H1 (cell line): ENCODE measurements at regions of chr9 and their contacts with region 1.

Region 1: GRCh38 chr9:136170006-136170901 is 34.7 kb downstream of the LHX3 start:
- DNase-seq: peak in 1 of 2 experiments; percentile 92
- H3K4me3 ChIP-seq: no peak overlapping the region
- H3K27ac ChIP-seq: no peak overlapping the region
- H3K4me1 ChIP-seq: peaks cover 0 to 21% (median 17%) of the 10 kb centered on the region in 4 experiments; a peak in 6 of 7 replicates
- H3K27me3 ChIP-seq: no peaks in the 10 kb centered on the region
- CTCF ChIP-seq: peak in 2 of 3 experiments; percentile 82 to 88; a peak in 3 of 4 replicates
- EP300 ChIP-seq: no peak
- POLR2A ChIP-seq: no peak
- RAD21 ChIP-seq: peak; percentile 79 to 84

Region 2: DNA sequence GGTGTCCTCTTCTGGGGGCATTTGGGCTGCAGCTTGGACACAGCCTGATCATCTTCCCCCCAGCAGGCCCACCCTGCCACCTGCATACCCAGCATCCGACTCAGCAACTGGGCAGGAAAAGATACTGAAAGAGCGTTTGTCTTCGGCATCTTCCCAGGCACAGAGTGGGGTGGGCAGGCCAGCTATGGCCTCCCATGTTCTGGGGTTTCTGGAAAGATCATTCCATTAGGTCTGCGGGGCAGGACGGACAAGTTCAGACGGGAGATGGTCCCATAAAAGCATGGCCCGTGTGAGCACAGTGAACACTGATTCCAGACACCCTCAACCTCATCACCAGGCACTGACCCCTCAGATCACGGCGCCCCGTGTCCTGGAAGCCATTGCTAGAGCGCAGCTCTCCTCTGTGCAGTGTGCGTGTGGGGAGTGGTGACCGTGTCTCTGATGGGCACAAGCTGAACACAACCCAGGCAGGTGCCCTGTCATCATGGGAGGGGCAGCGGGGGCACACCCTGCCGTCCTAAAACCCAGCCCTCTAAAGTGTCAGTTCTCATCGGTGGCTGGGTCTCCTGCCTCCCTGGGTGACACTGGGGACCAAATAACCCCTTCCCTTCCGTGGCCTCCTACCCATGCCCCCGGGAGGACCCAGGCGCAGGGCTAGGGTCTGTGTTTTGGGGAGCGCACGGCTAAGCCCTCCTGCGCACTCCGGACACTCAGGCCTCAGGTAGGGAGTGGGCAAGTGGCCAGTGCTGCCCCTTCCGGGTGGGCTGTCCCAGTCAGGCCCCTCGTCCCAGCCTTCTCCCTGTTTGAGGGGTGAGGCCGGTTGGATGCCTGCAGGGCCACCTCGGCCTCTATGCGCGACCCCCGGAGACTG is 38.4 kb before region 1 on chr9:
- CTCF ChIA-PET with region 1: no interaction called
- POLR2A ChIA-PET with region 1: no interaction called
- DNase-seq: no peak
- H3K4me3 ChIP-seq: peak overlapping the region in 1 of 4 experiments; percentile 65; a peak in 3 of 8 replicates
- H3K27ac ChIP-seq: no peak overlapping the region
- H3K4me1 ChIP-seq: peaks cover 0 to 20% (median 11%) of the 10 kb centered on the region in 4 experiments; a peak in 5 of 7 replicates
- H3K27me3 ChIP-seq: peaks cover 4 to 29% (median 22%) of the 10 kb centered on the region in 4 experiments; a peak in 6 of 7 replicates
- CTCF ChIP-seq: 0 out of 4 replicates have a peak, but pooled peaks of 1 of the 3 experiments have one; percentile 3
- EP300 ChIP-seq: no peak
- POLR2A ChIP-seq: no peak
- RAD21 ChIP-seq: no peak

Region 3: GRCh38 chr9:136147890-136148714 is 22.2 kb before region 1 on chr9:
- CTCF ChIA-PET with region 1: interaction called, 18 read pairs
- POLR2A ChIA-PET with region 1: interaction called, 8 read pairs
- DNase-seq: no peak
- H3K4me3 ChIP-seq: no peak overlapping the region
- H3K27ac ChIP-seq: no peak overlapping the region
- H3K4me1 ChIP-seq: peaks cover 0 to 33% (median 25%) of the 10 kb centered on the region in 4 experiments; a peak in 6 of 7 replicates
- H3K27me3 ChIP-seq: peaks cover 0 to 4% (median 3%) of the 10 kb centered on the region in 4 experiments; a peak in 4 of 7 replicates
- CTCF ChIP-seq: no peak
- EP300 ChIP-seq: no peak
- POLR2A ChIP-seq: no peak
- RAD21 ChIP-seq: no peak

Region 4: DNA sequence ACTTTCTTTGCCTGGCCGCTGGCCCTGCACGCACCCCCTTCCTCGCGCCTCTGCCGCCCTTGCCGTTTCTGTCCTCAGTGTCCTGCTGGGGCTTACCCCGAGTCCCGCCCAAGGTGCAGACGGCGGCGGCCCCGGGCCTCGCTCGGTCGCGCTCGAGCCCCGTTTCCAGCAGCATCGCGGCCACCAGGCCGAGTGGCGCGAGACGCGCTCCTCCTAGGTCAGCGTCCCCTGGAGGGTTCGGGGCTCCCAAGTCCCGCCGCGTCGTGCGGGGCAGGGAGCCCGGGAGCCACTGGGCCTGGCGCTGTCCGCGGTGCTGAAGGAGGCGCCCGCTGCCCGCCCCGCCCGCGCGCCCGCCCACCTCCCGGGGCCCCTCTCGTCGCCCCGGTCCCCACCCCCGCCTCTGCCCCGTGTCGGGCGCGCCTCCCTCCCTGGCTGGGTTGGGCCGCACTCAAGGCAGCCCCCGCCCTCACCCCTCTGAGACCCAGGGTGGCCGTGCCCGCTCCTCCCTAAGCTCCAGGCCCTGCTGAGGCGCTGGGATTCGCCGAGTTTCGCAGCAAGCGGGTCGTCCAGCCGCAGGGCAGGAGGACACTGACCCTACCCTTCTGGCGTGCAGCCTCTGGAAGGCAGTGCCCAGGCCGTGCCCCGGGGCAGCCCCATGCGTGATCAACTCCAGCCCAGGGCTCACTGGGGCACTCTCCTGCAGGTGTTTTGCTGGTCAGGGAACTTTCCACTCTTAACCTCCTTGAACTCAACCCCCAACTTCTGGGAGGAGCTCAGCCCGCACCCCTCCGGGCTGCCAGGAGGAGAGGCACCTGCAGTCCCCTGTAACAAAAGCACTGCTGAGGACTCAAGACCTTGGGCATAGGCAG is 34.8 kb after region 1 on chr9 and contains the start of gene LHX3:
- CTCF ChIA-PET with region 1: interaction called, 11 read pairs
- POLR2A ChIA-PET with region 1: no interaction called
- DNase-seq: peak in 1 of 2 experiments; percentile 83
- H3K4me3 ChIP-seq: peak within 1 kb of the TSS in 1 of 4 experiments; percentile 37; a peak in 1 of 8 replicates
- H3K27ac ChIP-seq: no peak within 1 kb of the TSS
- H3K4me1 ChIP-seq: peaks cover 2 to 9% (median 6%) of the 10 kb centered on the region in 4 experiments; a peak in 6 of 7 replicates
- H3K27me3 ChIP-seq: peaks cover 47 to 61% (median 60%) of the 10 kb centered on the region in 4 experiments
- CTCF ChIP-seq: no peak
- EP300 ChIP-seq: no peak
- POLR2A ChIP-seq: no peak
- RAD21 ChIP-seq: no peak
- total RNA-seq, gene LHX3: not detected in 2 replicates

Region 5: DNA sequence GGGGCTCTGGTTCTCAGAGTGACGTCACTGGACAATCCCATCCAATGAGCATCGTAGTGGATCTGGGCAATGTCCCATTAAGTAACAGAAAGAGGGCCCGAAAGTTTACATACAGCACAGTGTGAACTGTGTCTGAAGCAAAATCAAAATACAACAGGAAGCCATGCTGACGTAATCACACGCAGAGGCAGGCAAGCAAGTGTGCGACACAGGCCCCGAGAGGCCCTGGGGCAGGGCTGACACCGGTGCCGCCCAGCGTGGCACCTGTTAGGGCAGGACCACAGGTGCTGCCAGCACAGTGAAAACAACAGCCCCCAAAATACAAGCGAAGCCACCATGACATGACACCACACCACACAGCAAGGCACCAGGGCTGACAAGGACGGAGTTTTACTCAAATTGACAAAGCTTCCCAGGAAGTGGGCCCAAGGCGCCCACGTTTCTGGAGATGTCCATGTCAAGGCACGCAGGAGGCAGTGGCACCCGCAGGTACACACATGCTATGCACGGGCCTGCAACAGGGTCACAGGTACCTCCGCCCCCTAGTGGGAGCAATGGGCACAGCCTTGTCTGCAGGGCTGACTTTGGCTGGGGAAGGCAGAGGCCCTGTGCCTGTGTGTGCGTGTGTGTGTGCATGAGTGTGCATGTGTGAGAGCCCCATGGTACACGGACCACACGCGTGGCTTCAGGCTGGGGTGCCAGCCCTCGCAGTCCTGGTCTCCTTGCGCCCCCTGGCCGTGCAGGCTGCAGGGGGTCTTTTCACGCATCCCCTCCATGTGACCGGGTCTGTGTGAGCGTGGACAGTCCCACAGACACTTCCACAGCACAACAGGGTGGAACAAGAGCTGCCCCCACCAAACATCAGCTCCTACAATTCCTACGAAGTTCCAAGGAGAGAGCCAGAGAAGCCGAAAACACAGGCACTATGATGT is 55.8 kb after region 1 on chr9:
- CTCF ChIA-PET with region 1: interaction called, 12 read pairs
- POLR2A ChIA-PET with region 1: no interaction called
- DNase-seq: peak; percentile 44 to 92
- H3K4me3 ChIP-seq: no peak overlapping the region
- H3K27ac ChIP-seq: no peak overlapping the region
- H3K4me1 ChIP-seq: no peaks in the 10 kb centered on the region; a peak in 1 of 7 replicates
- H3K27me3 ChIP-seq: no peaks in the 10 kb centered on the region
- CTCF ChIP-seq: peak in 2 of 3 experiments; percentile 98 to 99; a peak in 3 of 4 replicates
- EP300 ChIP-seq: no peak
- POLR2A ChIP-seq: no peak
- RAD21 ChIP-seq: peak; percentile 74 to 85